GM18951 (cell line): ENCODE measurements at regions of chr12 and their contacts with region 1.

Region 1: GRCh38 chr12:69239352-69239921 is at the start of gene CPSF6:
- POLR2A ChIP-seq: peak; percentile 93

Region 2: DNA sequence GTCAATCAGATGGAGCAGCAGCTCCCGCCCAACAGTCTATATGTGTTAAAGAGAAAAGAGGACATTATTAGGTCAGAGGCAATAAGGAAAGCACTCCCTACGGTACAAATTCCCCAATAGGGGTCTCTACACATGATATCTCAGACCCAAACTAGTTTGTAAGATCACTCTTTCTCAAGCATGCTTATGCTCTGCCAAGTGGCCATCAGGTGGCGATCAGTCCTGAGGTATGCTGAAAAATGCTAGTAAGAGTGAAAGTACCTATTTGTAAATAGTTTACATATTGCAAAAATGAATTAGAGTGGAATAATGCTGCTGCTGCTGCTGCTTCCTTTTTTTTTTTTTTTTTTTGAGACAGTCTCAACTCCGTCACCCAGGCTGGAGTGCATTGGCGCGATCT is 367.5 kb before region 1 on chr12:
- in situ Hi-C with region 1: loop called (anchors 25 kb)
- POLR2A ChIP-seq: no peak

Region 3: GRCh38 chr12:69157023-69157655 is 82.3 kb before region 1 on chr12:
- in situ Hi-C with region 1: loop called (anchors 10 kb)
- POLR2A ChIP-seq: no peak